ENCODE measurements at regions of chr13 and their contacts with region 1.

Region 1: DNA sequence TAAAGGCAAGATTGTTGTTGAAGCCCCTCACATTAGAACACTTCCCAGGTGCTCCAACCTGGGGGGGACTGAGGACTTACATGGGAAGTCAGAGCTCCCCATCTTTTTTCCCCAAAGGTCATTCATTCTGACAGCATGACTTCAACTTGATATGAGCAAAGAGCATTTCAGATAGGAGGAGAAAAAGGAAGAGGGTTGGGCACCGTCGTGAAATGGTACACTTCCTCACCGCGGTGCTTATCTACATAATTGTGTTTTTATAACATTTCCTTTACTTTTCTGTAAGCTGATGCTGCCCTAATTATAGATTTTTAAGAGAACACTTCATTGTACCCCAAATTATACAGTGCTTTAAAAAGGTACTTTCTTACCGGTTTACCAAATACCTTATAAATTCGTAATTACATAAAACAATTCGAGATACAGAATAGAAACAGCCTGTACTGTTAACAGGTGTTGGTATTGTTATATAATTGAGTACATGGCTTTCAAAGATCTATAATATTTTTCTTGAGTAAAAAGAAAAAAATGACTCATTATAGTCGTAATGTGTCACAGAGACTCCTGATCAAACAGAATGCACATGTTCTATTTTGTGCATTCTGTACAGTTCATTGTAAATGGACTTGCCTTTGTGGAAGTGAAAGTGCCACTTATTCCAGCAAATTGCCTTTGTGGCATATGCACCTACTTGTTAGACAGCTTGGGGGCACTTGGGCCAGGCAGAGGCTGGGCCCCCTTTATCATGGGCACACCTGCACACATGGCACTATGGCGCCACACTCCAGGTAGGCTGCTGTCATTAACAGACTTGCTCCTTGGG is 81.8 kb downstream of the GGACT start:
- DNase-seq: no peak
- H3K4me3 Mint-ChIP-seq: peak overlapping the region; percentile 77
- H3K27ac Mint-ChIP-seq: peak overlapping the region; percentile 85
- H3K4me1 Mint-ChIP-seq: peaks cover 20% of the 10 kb centered on the region
- H3K27me3 Mint-ChIP-seq: peaks cover 13% of the 10 kb centered on the region

Region 2: GRCh38 chr13:100129605-100130004 is 377.2 kb before region 1 on chr13:
- intact Hi-C with region 1: loop called (anchors 5 kb)
- DNase-seq: peak; percentile 59
- H3K4me3 Mint-ChIP-seq: peak overlapping the region; percentile 8
- H3K27ac Mint-ChIP-seq: peak overlapping the region; percentile 29
- H3K4me1 Mint-ChIP-seq: peaks cover 22% of the 10 kb centered on the region
- H3K27me3 Mint-ChIP-seq: no peaks in the 10 kb centered on the region

Region 3: GRCh38 chr13:100434010-100434763 is 72.6 kb before region 1 on chr13:
- intact Hi-C with region 1: loop called (anchors 2 kb)
- DNase-seq: peak; percentile 68
- H3K4me3 Mint-ChIP-seq: peak overlapping the region; percentile 22
- H3K27ac Mint-ChIP-seq: peak overlapping the region; percentile 26
- H3K4me1 Mint-ChIP-seq: peaks cover 31% of the 10 kb centered on the region
- H3K27me3 Mint-ChIP-seq: no peaks in the 10 kb centered on the region

Region 4: GRCh38 chr13:100470866-100471505 is 35.8 kb before region 1 on chr13:
- intact Hi-C with region 1: loop called (anchors 2 kb)
- DNase-seq: no peak
- H3K4me3 Mint-ChIP-seq: no peak overlapping the region
- H3K27ac Mint-ChIP-seq: no peak overlapping the region
- H3K4me1 Mint-ChIP-seq: peaks cover 9% of the 10 kb centered on the region
- H3K27me3 Mint-ChIP-seq: no peaks in the 10 kb centered on the region

Region 5: DNA sequence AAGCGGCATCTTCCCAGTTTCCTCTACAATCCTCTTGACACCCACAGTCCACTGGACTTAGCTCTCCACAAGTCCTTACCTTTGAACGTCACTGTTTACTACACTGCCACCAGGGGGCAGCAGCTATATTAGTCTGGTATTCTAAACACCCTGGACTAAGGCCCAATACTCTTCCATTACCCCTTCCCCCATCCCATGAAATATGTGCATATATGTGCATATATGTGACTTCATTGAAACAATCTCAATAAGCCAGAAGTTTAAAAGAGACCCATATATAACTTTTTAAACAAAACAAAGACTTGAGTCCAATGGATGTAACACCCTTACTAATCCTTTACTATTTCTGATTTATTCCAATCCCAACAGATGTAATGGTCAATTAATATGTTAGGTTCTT is 66.3 kb after region 1 on chr13:
- intact Hi-C with region 1: no loop called
- DNase-seq: peak; percentile 92
- H3K4me3 Mint-ChIP-seq: no peak overlapping the region
- H3K27ac Mint-ChIP-seq: no peak overlapping the region
- H3K4me1 Mint-ChIP-seq: peaks cover 19% of the 10 kb centered on the region
- H3K27me3 Mint-ChIP-seq: no peaks in the 10 kb centered on the region

Measured in activated CD4-positive, alpha-beta T cell treated with anti-CD3 and anti-CD28 coated beads, Interleukin-2, amount 10 ng/mL, durations not matched to agents 24 days and 14 days (primary cell).